Psoas muscle (tissue), 8 donors: ENCODE measurements at regions of chr9 and their contacts with region 1.

Region 1: GRCh38 chr9:105694190-105694847 is at the start of gene TMEM38B:
- DNase-seq: peak; percentile 84 to 91
- ATAC-seq: peak; percentile 86 to 90 (median 88)
- H3K4me3 ChIP-seq: peak within 1 kb of the TSS; percentile 86
- H3K27ac ChIP-seq: peak within 1 kb of the TSS; percentile 97
- H3K4me1 ChIP-seq: peaks cover 49% of the 10 kb centered on the region
- H3K27me3 ChIP-seq: no peaks in the 10 kb centered on the region
- CTCF ChIP-seq: no peak
- total RNA-seq, gene TMEM38B: 61.5 to 129 (median 87.1) TPM

Region 2: GRCh38 chr9:105447814-105448812 is 246.2 kb before region 1 on chr9 and contains the start of gene FSD1L:
- intact Hi-C with region 1: loop called in 1 of 2 experiments (anchors 10 kb)
- DNase-seq: peak; percentile 95 to 97
- ATAC-seq: peak; percentile 83 to 91 (median 85)
- H3K4me3 ChIP-seq: peak within 1 kb of the TSS; percentile 88
- H3K27ac ChIP-seq: peak within 1 kb of the TSS; percentile 89
- H3K4me1 ChIP-seq: peaks cover 46% of the 10 kb centered on the region
- H3K27me3 ChIP-seq: no peaks in the 10 kb centered on the region
- CTCF ChIP-seq: peak; percentile 44
- total RNA-seq, gene FSD1L: 17.0 to 28.6 (median 21.7) TPM

Region 3: GRCh38 chr9:105822814-105823213 is 128.5 kb after region 1 on chr9:
- intact Hi-C with region 1: no loop called
- DNase-seq: no peak
- ATAC-seq: peak in 1 of 4 donors; percentile 28
- H3K4me3 ChIP-seq: no peak overlapping the region
- H3K27ac ChIP-seq: no peak overlapping the region
- H3K4me1 ChIP-seq: no peaks in the 10 kb centered on the region
- H3K27me3 ChIP-seq: no peaks in the 10 kb centered on the region
- CTCF ChIP-seq: no peak